ENCODE measurements at regions of chr11 and their contacts with region 1.

Region 1: GRCh38 chr11:62726915-62727763 is at the start of gene HNRNPUL2:
- DNase-seq: peak; percentile 94 to 99 (median 96)
- ATAC-seq: peak; percentile 90
- H3K4me3 ChIP-seq: peak within 1 kb of the TSS; percentile 90
- H3K27ac ChIP-seq: peak within 1 kb of the TSS; percentile 99
- H3K4me1 ChIP-seq: peaks cover 13 to 19% of the 10 kb centered on the region in 2 experiments; a peak in 4 of 5 replicates
- H3K27me3 ChIP-seq: no peaks in the 10 kb centered on the region
- CTCF ChIP-seq: peak in 1 of 3 experiments; percentile 40; a peak in 2 of 6 replicates
- EP300 ChIP-seq: peak; percentile 0; the same call in 1 of the 2 replicates
- POLR2A ChIP-seq: peak; percentile 95
- RAD21 ChIP-seq: no peak
- polyA plus RNA-seq, gene HNRNPUL2: 0.89 to 1.4 TPM

Region 2: GRCh38 chr11:62591448-62592145 is 135.5 kb before region 1 on chr11 and contains the start of gene TUT1:
- CTCF ChIA-PET with region 1: no interaction called
- POLR2A ChIA-PET with region 1: interaction called, 5 read pairs
- in situ Hi-C with region 1: no loop called
- intact Hi-C with region 1: loop called (anchors 5 kb)
- DNase-seq: peak; percentile 81 to 99 (median 86)
- ATAC-seq: peak; percentile 91
- H3K4me3 ChIP-seq: peak within 1 kb of the TSS; percentile 63
- H3K27ac ChIP-seq: peak within 1 kb of the TSS; percentile 90
- H3K4me1 ChIP-seq: peaks cover 24 to 25% of the 10 kb centered on the region in 2 experiments
- H3K27me3 ChIP-seq: no peaks in the 10 kb centered on the region
- CTCF ChIP-seq: peak; percentile 1 to 6 (median 1); a peak in 1 of 6 replicates
- EP300 ChIP-seq: peak; percentile 79
- POLR2A ChIP-seq: peak; percentile 98
- RAD21 ChIP-seq: peak in 1 of 2 experiments; percentile 2; a peak in 1 of 4 replicates
- polyA plus RNA-seq, gene TUT1: 0.66 to 1.5 TPM

Region 3: DNA sequence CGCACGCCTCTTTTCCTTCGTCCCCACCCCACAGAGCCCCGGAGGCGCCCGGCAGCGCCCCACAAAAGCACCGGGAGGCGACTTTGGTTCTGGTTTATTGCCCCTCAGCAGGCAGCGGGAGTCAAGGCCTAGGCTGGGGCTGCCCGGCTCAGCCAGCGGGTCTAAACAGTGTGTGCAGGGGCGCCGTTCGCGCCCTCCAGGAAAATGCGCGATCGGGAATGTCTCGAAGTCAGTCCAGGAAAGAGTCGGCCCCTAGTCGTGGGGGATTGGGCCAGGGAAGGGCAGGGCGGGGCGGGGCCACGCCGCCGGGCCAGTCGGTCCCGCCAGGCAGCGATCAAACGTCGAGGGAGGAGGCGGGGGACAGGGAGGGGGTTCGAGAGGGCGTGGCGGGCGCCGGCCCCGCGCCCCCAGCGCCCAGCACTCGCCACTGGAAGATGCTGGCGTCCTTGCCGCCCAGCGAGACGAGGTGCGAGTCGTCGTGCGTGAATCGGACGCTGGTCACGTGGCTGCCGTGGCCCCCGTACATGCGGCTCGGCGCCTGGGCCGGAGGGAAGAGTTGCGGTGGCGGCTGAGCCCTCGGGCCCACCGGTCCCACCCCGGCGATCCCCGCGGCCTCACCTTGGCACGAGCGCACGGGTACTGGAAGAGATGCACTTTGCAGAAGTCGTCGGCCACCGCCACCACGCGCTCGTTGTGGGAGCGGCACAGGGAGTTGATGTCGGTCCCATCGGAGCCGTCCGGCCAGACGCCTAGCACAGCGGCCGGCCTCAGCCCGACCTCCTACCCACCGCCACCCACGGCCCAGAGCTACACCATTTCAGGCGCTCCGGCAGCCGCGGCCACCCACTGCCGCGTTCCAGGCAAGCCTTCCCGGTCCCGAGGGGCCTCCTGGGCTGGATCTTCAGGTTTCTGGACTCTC is 124.7 kb before region 1 on chr11:
- CTCF ChIA-PET with region 1: no interaction called
- POLR2A ChIA-PET with region 1: no interaction called
- in situ Hi-C with region 1: no loop called
- intact Hi-C with region 1: no loop called
- DNase-seq: peak; percentile 83 to 86 (median 85)
- ATAC-seq: peak; percentile 31
- H3K4me3 ChIP-seq: peak overlapping the region; percentile 95
- H3K27ac ChIP-seq: peak overlapping the region; percentile 87
- H3K4me1 ChIP-seq: peaks cover 14 to 43% of the 10 kb centered on the region in 2 experiments; a peak in 4 of 5 replicates
- H3K27me3 ChIP-seq: no peaks in the 10 kb centered on the region
- CTCF ChIP-seq: no peak
- EP300 ChIP-seq: no peak
- POLR2A ChIP-seq: 0 out of 2 replicates have a peak, but pooled peaks have one; percentile 31
- RAD21 ChIP-seq: no peak

Region 4: GRCh38 chr11:62671575-62672389 is 55.4 kb before region 1 on chr11 and contains the starts of genes LBHD1 and UQCC3:
- CTCF ChIA-PET with region 1: no interaction called
- POLR2A ChIA-PET with region 1: interaction called, 11 read pairs
- in situ Hi-C with region 1: no loop called
- intact Hi-C with region 1: no loop called
- DNase-seq: peak; percentile 66 to 96 (median 74)
- ATAC-seq: peak; percentile 72
- H3K4me3 ChIP-seq: peak within 1 kb of the TSS; percentile 91
- H3K27ac ChIP-seq: peak within 1 kb of the TSS; percentile 94
- H3K4me1 ChIP-seq: peaks cover 34 to 57% of the 10 kb centered on the region in 2 experiments; a peak in 4 of 5 replicates
- H3K27me3 ChIP-seq: no peaks in the 10 kb centered on the region
- CTCF ChIP-seq: no peak
- EP300 ChIP-seq: peak; percentile 53; the same call in 1 of the 2 replicates
- POLR2A ChIP-seq: peak; percentile 92
- RAD21 ChIP-seq: no peak
- polyA plus RNA-seq, gene LBHD1: 2.6 to 6.9 TPM
- polyA plus RNA-seq, gene UQCC3: 4.8 to 7.6 TPM

Region 5: DNA sequence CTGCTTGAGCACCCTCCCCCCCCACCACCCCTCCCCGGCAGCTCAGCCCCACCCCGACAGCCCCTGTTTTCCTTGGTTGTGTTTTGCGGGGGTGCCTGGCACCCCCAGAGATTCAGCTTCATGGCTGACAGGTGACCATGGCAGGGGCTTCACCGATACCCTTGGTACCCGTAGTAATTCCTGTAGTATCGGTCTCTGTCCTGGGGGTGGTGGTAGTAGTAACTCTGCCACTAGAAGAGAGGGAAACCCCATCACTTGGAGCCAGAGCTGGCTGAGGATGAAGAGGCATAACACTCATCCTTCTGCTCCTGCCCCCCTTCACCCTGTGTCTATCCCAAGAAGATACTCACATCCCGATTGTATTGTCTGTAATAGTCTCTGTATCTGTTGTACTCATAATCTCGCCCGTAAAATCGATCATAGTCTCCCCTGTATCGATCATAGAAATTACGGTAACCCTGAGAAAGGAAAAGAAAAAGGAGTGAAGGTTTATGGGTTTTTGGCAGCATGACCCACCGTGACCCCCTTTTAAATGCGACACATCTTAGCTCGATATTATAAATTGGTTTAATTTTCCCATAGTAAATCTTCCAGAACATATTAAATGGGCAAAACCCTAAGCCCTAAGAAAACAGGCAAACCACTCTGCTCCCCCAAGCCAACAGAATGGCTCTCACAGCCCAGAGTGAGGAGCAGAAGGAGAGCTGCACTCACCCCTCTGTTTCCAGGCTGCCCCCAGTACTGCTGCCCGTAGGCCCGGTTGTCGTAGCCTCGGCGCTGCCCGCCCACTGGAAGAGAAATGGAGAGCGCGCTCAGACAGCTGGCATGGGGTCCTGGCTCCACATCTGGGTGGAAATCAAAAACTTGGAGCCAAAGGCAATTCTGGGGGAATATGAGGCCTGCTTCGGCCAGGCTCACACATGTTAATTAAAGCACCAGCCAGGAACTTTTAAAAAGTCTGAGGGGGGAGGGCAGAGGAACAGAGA is 11.7 kb before region 1 on chr11:
- CTCF ChIA-PET with region 1: no interaction called
- POLR2A ChIA-PET with region 1: interaction called, 11 read pairs
- in situ Hi-C with region 1: no loop called
- intact Hi-C with region 1: no loop called
- DNase-seq: no peak
- ATAC-seq: no peak
- H3K4me3 ChIP-seq: no peak overlapping the region
- H3K27ac ChIP-seq: no peak overlapping the region
- H3K4me1 ChIP-seq: peaks cover 7 to 9% of the 10 kb centered on the region in 2 experiments; a peak in 4 of 5 replicates
- H3K27me3 ChIP-seq: no peaks in the 10 kb centered on the region
- CTCF ChIP-seq: no peak
- EP300 ChIP-seq: no peak
- POLR2A ChIP-seq: no peak
- RAD21 ChIP-seq: no peak

Region 6: DNA sequence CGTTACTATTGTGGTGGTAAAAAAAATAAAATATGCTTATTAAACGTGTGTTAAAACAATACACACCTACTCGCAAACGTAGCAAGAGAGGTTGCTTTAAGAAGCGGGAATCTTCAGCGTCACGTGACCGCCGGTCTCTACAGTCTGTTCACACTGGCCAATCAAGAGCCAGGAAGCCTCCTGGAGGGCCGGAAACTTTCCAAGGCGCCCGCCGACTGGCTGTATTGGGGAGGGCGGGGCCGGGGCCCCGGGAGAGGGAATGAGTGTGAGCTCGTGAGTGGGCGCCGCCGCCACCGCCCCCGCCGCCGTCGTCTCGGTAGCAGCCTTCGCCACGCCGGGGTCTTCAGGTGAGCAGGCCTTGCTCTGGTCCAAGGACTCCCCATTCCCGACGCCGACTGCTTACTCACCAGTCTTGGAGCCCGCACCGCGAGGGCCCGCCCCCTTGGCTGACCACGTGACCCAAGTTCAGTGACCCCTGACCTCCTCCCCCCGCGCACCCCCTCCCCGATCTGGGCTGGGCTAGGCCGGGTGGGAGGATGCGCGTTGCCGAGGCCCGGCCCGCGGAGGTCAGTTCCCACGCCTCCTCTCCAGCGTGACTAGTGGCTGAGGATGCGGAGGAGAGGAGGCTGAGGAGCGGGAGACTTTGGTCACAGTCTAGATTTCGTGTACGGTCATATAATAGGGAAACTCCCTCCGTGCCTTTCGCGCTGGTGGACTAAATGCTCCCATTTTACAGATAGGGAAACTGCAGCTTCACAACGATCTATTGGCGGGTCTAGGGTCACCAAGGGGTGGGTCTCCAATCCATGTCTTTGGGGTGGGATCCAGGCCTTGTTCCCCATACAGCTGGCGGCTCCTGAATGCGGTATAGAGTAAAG is 44.2 kb after region 1 on chr11 and contains the start of gene TAF6L:
- CTCF ChIA-PET with region 1: interaction called, 12 read pairs
- POLR2A ChIA-PET with region 1: interaction called, 15 read pairs
- in situ Hi-C with region 1: no loop called
- intact Hi-C with region 1: loop called (anchors 1 kb)
- DNase-seq: peak; percentile 97 to 99 (median 98)
- ATAC-seq: peak; percentile 95
- H3K4me3 ChIP-seq: peak within 1 kb of the TSS; percentile 48
- H3K27ac ChIP-seq: peak within 1 kb of the TSS; percentile 88
- H3K4me1 ChIP-seq: peaks cover 9 to 24% of the 10 kb centered on the region in 2 experiments
- H3K27me3 ChIP-seq: no peaks in the 10 kb centered on the region
- CTCF ChIP-seq: no peak; a peak in 1 of 6 replicates
- EP300 ChIP-seq: no peak; the same call in 1 of the 2 replicates
- POLR2A ChIP-seq: peak; percentile 86
- RAD21 ChIP-seq: peak in 1 of 2 experiments; percentile 20; a peak in 2 of 4 replicates
- polyA plus RNA-seq, gene TAF6L: 0.04 to 0.25 TPM

Region 7: GRCh38 chr11:62860835-62861563 is 133.9 kb after region 1 on chr11:
- CTCF ChIA-PET with region 1: no interaction called
- POLR2A ChIA-PET with region 1: interaction called, 7 read pairs
- in situ Hi-C with region 1: no loop called
- intact Hi-C with region 1: loop called (anchors 5 kb)
- DNase-seq: no peak
- ATAC-seq: no peak
- H3K4me3 ChIP-seq: peak overlapping the region; percentile 30; the same call in 1 of the 2 replicates
- H3K27ac ChIP-seq: peak overlapping the region; percentile 63; the same call in 2 of the 3 replicates
- H3K4me1 ChIP-seq: peaks cover 22 to 28% of the 10 kb centered on the region in 2 experiments; a peak in 4 of 5 replicates
- H3K27me3 ChIP-seq: no peaks in the 10 kb centered on the region
- CTCF ChIP-seq: no peak
- EP300 ChIP-seq: no peak
- POLR2A ChIP-seq: no peak
- RAD21 ChIP-seq: peak in 1 of 2 experiments; percentile 7; a peak in 1 of 4 replicates